OCI-LY7 (cell line): ENCODE measurements at regions of chr2 and their contacts with region 1.

Region 1: GRCh38 chr2:133171393-133172004 is 396.8 kb downstream of the NCKAP5 start:
- DNase-seq: peak; percentile 54
- H3K4me3 ChIP-seq: no peak overlapping the region
- H3K27ac ChIP-seq: no peak overlapping the region
- H3K4me1 ChIP-seq: no peaks in the 10 kb centered on the region
- CTCF ChIP-seq: peak; percentile 87

Region 2: GRCh38 chr2:132547074-132547687 is 624.3 kb before region 1 on chr2:
- CTCF ChIA-PET with region 1: no interaction called
- POLR2A ChIA-PET with region 1: no interaction called
- intact Hi-C with region 1: loop called (anchors 1 kb)
- DNase-seq: peak; percentile 76
- H3K4me3 ChIP-seq: no peak overlapping the region
- H3K27ac ChIP-seq: no peak overlapping the region
- H3K4me1 ChIP-seq: no peaks in the 10 kb centered on the region
- CTCF ChIP-seq: peak; percentile 90

Region 3: GRCh38 chr2:132715386-132716351 is 455.8 kb before region 1 on chr2:
- CTCF ChIA-PET with region 1: no interaction called
- POLR2A ChIA-PET with region 1: no interaction called
- intact Hi-C with region 1: loop called (anchors 10 kb)
- DNase-seq: peak; percentile 19
- H3K4me3 ChIP-seq: no peak overlapping the region
- H3K27ac ChIP-seq: no peak overlapping the region
- H3K4me1 ChIP-seq: peaks cover 12% of the 10 kb centered on the region
- CTCF ChIP-seq: no peak